ENCODE measurements at regions of chr2 and their contacts with region 1.

Region 1: GRCh38 chr2:135913727-135914365 is 37.6 kb upstream of the MCM6 start:
- DNase-seq: peak; percentile 34
- H3K4me3 ChIP-seq: no peak overlapping the region
- CTCF ChIP-seq: peak; percentile 59

Region 2: GRCh38 chr2:136025057-136025973 is 111.5 kb after region 1 on chr2:
- in situ Hi-C with region 1: no loop called
- DNase-seq: peak; percentile 87
- H3K4me3 ChIP-seq: peak overlapping the region; percentile 17
- CTCF ChIP-seq: no peak

Region 3: DNA sequence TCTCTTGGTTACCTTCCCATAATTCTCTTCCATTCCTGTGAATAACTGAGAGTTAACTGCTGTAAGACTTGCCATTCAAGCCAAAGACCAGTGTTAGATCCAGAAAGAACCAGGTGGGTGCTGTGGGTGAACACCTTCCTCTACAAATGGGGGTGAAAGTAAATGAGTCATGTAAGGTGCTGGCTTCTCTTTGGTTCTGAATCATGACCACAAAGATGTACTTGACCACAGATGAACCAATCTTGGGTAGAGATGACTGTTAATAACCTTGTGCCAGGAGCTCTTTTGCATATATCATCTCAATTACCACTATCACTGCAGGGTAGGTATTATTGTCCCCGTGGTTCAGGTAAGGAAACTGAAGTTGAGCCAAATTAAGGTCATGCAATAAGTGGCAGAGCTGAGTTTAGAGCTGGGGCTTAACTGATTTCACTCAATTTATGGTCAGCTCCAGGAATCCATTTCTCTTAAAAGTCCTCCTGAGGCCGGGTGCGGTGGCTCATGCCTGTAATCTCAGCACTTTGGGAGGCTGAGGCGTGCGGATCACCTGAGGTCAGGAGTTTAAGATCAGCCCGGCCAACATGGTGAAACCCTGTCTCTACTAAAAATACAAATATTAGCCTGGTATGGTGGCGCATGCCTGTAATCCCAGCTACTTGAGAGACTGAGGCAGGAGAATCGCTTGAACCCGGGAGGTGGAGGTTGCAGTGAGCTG is 449.0 kb after region 1 on chr2:
- in situ Hi-C with region 1: loop called (anchors 25 kb)
- DNase-seq: no peak
- H3K4me3 ChIP-seq: no peak overlapping the region
- CTCF ChIP-seq: no peak

Measured in astrocyte of the cerebellum (primary cell).